ENCODE measurements at regions of chr2 and their contacts with region 1.

Region 1: DNA sequence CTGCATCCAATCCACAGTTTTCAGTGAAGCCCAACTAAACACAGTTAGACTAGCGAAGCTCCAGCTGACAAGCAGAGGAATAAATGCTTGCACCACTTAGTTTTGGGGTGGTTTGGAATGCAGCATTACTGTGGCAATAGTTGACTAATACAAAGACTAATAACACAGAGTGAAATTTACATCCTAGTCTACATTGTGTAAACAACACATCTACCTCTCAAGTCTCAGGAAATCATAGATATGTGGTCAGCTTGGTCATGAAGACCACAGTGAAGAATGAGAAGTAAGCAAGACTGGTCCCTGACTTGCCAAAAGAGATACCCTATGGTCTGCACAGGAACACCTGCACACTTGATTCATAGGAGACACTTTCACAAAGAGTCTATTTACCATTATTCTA is 155.1 kb upstream of the TANK start:
- DNase-seq: no peak
- H3K4me3 ChIP-seq: no peak overlapping the region
- CTCF ChIP-seq: no peak
- POLR2A ChIP-seq: no peak

Region 2: GRCh38 chr2:159573846-159574606 is 1431.1 kb before region 1 on chr2:
- intact Hi-C with region 1: loop called (anchors 5 kb)
- DNase-seq: no peak
- H3K4me3 ChIP-seq: no peak overlapping the region
- CTCF ChIP-seq: no peak
- POLR2A ChIP-seq: no peak

Region 3: GRCh38 chr2:160674146-160674750 is 330.9 kb before region 1 on chr2:
- intact Hi-C with region 1: no loop called
- DNase-seq: no peak
- H3K4me3 ChIP-seq: no peak overlapping the region
- CTCF ChIP-seq: no peak
- POLR2A ChIP-seq: no peak